ENCODE measurements at regions of chr6 and their contacts with region 1.

Region 1: GRCh38 chr6:17714879-17715851 is 8.4 kb upstream of the NUP153 start:
- DNase-seq: peak; percentile 89
- ATAC-seq: peak; percentile 93
- H3K4me3 ChIP-seq: no peak overlapping the region
- H3K27ac ChIP-seq: no peak overlapping the region
- H3K4me1 ChIP-seq: peaks cover 17% of the 10 kb centered on the region
- H3K27me3 ChIP-seq: no peaks in the 10 kb centered on the region
- CTCF ChIP-seq: no peak

Region 2: GRCh38 chr6:17741507-17741906 is 26.3 kb after region 1 on chr6:
- CTCF ChIA-PET with region 1: no interaction called
- POLR2A ChIA-PET with region 1: interaction called, 19 read pairs
- intact Hi-C with region 1: no loop called
- DNase-seq: no peak
- ATAC-seq: no peak
- H3K4me3 ChIP-seq: no peak overlapping the region
- H3K27ac ChIP-seq: no peak overlapping the region
- H3K4me1 ChIP-seq: no peaks in the 10 kb centered on the region
- H3K27me3 ChIP-seq: no peaks in the 10 kb centered on the region
- CTCF ChIP-seq: no peak

Region 3: DNA sequence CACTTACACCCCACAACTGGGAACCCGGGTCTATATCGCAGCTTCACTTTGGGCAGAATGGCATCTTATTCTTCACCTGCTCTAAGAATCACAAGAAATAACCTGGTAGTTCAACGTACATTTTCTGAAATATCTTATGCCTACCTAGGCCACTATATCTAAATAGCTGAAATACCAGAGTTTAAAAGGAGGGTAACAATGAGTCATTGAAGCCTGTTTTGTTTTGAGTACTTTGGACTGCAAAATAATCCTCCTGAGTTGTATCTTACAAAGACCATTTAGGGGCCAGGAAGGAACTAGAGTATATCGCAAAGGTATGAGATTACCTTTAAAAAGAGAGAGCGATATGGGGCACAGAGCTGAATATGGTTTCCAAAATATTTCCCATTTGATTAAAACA is 88.2 kb after region 1 on chr6:
- CTCF ChIA-PET with region 1: interaction called, 13 read pairs
- POLR2A ChIA-PET with region 1: no interaction called
- intact Hi-C with region 1: no loop called
- DNase-seq: peak; percentile 6
- ATAC-seq: no peak
- H3K4me3 ChIP-seq: no peak overlapping the region
- H3K27ac ChIP-seq: no peak overlapping the region
- H3K4me1 ChIP-seq: peaks cover 2% of the 10 kb centered on the region; the same call in 1 of the 2 replicates
- H3K27me3 ChIP-seq: no peaks in the 10 kb centered on the region
- CTCF ChIP-seq: no peak